ENCODE measurements at regions of chr18 and their contacts with region 1.

Region 1: GRCh38 chr18:63758615-63759240 is 16.5 kb upstream of the SERPINB7 start:
- DNase-seq: no peak
- ATAC-seq: no peak
- H3K4me3 ChIP-seq: no peak overlapping the region
- H3K27ac ChIP-seq: no peak overlapping the region
- H3K4me1 ChIP-seq: no peaks in the 10 kb centered on the region
- H3K27me3 ChIP-seq: no peaks in the 10 kb centered on the region
- CTCF ChIP-seq: no peak
- EP300 ChIP-seq: no peak
- POLR2A ChIP-seq: no peak
- RAD21 ChIP-seq: no peak

Region 2: DNA sequence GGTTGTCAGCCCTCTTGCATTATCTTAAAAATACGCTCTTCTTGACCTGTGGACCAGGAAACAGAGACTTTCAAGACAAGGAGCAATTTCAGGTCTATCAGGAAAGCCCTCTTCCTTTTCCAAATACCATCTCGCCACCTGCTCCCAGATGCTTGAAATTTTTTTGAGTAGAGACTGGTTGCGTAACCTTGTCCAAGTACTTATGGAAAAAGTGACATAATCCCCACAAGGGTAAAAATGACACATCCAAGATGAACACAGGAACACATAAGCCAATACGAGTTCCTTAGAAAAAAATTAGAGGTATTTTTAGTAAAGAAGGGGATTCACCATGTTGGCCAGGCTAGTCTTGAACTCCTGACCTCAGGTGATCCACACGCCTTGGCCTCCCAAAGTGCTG is 169.8 kb before region 1 on chr18:
- CTCF ChIA-PET with region 1: no interaction called
- POLR2A ChIA-PET with region 1: no interaction called
- in situ Hi-C with region 1: no loop called
- intact Hi-C with region 1: loop called (anchors 5 kb)
- DNase-seq: no peak
- ATAC-seq: no peak
- H3K4me3 ChIP-seq: no peak overlapping the region
- H3K27ac ChIP-seq: no peak overlapping the region
- H3K4me1 ChIP-seq: no peaks in the 10 kb centered on the region
- H3K27me3 ChIP-seq: 0 out of 5 replicates have a peak, but pooled peaks cover 0 to 3% of the 10 kb centered on the region in 2 experiments
- CTCF ChIP-seq: no peak
- EP300 ChIP-seq: no peak
- POLR2A ChIP-seq: no peak
- RAD21 ChIP-seq: no peak

Measured in HepG2 (cell line).